GM12878 (cell line): ENCODE measurements at regions of chr4 and their contacts with region 1.

Region 1: DNA sequence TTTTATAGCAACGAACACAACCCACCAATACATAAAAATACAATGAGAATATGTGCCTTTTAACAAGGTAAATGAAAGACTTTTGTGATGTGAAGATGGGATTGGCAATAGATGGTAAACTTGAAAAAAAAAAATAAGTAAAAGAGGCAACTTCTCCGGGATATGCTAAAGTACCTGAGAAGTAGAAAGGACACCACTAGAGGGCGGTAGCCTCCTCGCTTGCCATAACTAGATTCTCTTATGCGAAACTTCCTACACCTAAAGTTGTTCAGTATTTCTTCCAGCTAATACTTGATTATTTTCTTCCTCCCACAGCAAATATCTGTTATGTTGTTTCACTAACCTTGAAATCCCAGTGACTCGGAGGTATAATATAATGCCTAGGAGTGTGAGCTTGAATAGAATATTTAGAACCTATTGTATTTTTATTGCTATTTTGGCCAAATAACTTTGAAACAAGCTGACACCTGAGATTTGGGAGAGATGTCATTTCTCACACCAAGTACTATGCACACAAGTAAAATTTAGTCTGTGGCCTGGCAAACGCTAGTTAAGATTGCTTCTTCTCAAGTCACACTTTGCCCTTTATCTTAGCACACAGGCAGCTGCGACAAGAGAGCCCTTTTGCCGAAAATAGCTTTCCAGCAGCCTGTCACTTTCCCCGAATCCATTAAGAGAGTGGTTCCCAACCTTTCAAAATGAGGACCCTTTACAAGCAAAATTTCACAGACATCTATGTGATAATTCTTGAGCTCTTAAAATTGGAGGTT is 44.9 kb upstream of the PDLIM5 start:
- DNase-seq: peak; percentile 25
- ATAC-seq: peak; percentile 87
- H3K4me3 ChIP-seq: no peak overlapping the region
- H3K27ac ChIP-seq: no peak overlapping the region
- H3K4me1 ChIP-seq: no peaks in the 10 kb centered on the region
- H3K27me3 ChIP-seq: no peaks in the 10 kb centered on the region
- CTCF ChIP-seq: peak; percentile 83 to 87 (median 86)
- EP300 ChIP-seq: no peak
- POLR2A ChIP-seq: no peak
- RAD21 ChIP-seq: peak; percentile 92

Region 2: DNA sequence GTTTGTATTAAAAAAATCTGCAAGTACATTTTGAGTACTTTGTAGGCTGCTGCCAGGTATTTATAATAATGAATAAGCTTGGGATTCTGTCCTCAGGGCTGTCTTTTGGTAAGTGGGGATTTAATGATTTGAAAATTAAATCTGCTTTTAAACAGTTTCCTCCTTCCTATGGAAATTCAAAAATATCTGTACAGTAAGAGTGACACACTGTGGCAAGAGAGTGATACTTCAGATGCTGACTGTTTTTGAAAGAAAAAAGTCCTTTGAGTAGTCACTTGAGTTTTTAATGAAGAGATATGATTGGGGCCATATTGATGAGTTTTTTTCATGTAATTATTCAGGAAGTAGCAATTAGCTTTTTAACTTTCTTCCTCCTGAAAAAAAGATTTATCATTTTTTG is 150.0 kb before region 1 on chr4:
- CTCF ChIA-PET with region 1: no interaction called
- POLR2A ChIA-PET with region 1: no interaction called
- RAD21 ChIA-PET with region 1: no interaction called
- SMC1A ChIA-PET with region 1: no interaction called
- in situ Hi-C with region 1: no loop called
- intact Hi-C with region 1: no loop called
- DNase-seq: no peak
- ATAC-seq: peak; percentile 47; the same call in 2 of the 3 replicates
- H3K4me3 ChIP-seq: no peak overlapping the region
- H3K27ac ChIP-seq: no peak overlapping the region
- H3K4me1 ChIP-seq: no peaks in the 10 kb centered on the region
- H3K27me3 ChIP-seq: no peaks in the 10 kb centered on the region
- CTCF ChIP-seq: peak in 2 of 3 experiments; percentile 20 to 23; a peak in 1 of 6 replicates
- EP300 ChIP-seq: no peak
- POLR2A ChIP-seq: no peak
- RAD21 ChIP-seq: peak; percentile 28; the same call in 1 of the 2 replicates

Region 3: GRCh38 chr4:94390804-94391410 is 15.9 kb before region 1 on chr4:
- CTCF ChIA-PET with region 1: interaction called, 26 read pairs
- POLR2A ChIA-PET with region 1: no interaction called
- RAD21 ChIA-PET with region 1: no interaction called
- SMC1A ChIA-PET with region 1: interaction called, 7 read pairs
- in situ Hi-C with region 1: no loop called
- intact Hi-C with region 1: no loop called
- DNase-seq: no peak
- ATAC-seq: peak; percentile 67
- H3K4me3 ChIP-seq: no peak overlapping the region
- H3K27ac ChIP-seq: no peak overlapping the region
- H3K4me1 ChIP-seq: no peaks in the 10 kb centered on the region
- H3K27me3 ChIP-seq: peaks cover 0 to 2% of the 10 kb centered on the region in 2 experiments; a peak in 1 of 4 replicates
- CTCF ChIP-seq: peak; percentile 46 to 53 (median 47); a peak in 4 of 6 replicates
- EP300 ChIP-seq: no peak
- POLR2A ChIP-seq: no peak
- RAD21 ChIP-seq: peak; percentile 49

Region 4: DNA sequence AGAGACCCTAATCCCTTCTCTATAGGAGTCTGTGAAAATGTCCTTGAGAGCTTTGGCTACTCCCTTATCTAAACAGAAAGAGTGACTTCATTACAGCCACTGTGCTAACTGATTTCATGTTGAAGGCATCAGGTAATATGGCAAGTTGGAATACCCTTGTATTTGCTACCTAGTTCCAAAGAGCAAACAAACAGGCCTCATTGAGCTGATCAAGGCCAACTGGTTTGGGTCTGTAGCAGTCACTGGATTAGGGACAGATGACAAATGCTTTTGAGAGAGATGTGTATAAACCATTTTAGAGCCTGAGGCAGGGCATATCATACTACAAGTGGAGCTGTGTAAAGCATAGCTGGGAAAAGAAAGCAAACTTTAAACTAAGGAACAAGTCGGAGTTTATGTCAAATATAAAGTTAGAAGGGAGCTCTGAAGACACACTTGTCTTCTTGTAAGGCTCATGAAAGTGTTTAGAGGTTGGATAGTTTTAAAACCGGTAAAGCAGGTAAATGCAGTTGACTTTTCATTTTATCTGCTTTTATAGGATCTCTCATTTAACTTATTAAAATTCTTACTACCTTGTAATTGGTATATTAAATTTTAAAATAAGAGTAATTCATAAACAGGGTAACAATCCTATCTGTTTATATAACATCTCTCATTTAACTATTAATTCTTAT is 22.2 kb after region 1 on chr4:
- CTCF ChIA-PET with region 1: interaction called, 32 read pairs
- POLR2A ChIA-PET with region 1: no interaction called
- RAD21 ChIA-PET with region 1: no interaction called
- SMC1A ChIA-PET with region 1: interaction called, 10 read pairs
- in situ Hi-C with region 1: no loop called
- intact Hi-C with region 1: no loop called
- DNase-seq: no peak
- ATAC-seq: no peak
- H3K4me3 ChIP-seq: no peak overlapping the region
- H3K27ac ChIP-seq: no peak overlapping the region
- H3K4me1 ChIP-seq: no peaks in the 10 kb centered on the region
- H3K27me3 ChIP-seq: no peaks in the 10 kb centered on the region; a peak in 1 of 4 replicates
- CTCF ChIP-seq: no peak
- EP300 ChIP-seq: no peak
- POLR2A ChIP-seq: no peak
- RAD21 ChIP-seq: no peak

Region 5: GRCh38 chr4:94578195-94578594 is 171.3 kb after region 1 on chr4:
- CTCF ChIA-PET with region 1: interaction called, 14 read pairs
- POLR2A ChIA-PET with region 1: no interaction called
- RAD21 ChIA-PET with region 1: interaction called, 7 read pairs
- SMC1A ChIA-PET with region 1: interaction called, 10 read pairs
- in situ Hi-C with region 1: no loop called
- intact Hi-C with region 1: no loop called
- DNase-seq: no peak
- ATAC-seq: no peak
- H3K4me3 ChIP-seq: no peak overlapping the region
- H3K27ac ChIP-seq: no peak overlapping the region
- H3K4me1 ChIP-seq: no peaks in the 10 kb centered on the region
- H3K27me3 ChIP-seq: no peaks in the 10 kb centered on the region
- CTCF ChIP-seq: no peak
- EP300 ChIP-seq: no peak
- POLR2A ChIP-seq: no peak
- RAD21 ChIP-seq: no peak

Region 6: GRCh38 chr4:94595879-94596483 is 189.1 kb after region 1 on chr4:
- CTCF ChIA-PET with region 1: interaction called, 32 read pairs
- POLR2A ChIA-PET with region 1: no interaction called
- RAD21 ChIA-PET with region 1: interaction called, 7 read pairs
- SMC1A ChIA-PET with region 1: interaction called, 17 read pairs
- in situ Hi-C with region 1: loop called (anchors 5 kb)
- intact Hi-C with region 1: loop called (anchors 1 kb)
- DNase-seq: peak; percentile 8
- ATAC-seq: peak; percentile 78
- H3K4me3 ChIP-seq: no peak overlapping the region
- H3K27ac ChIP-seq: no peak overlapping the region
- H3K4me1 ChIP-seq: no peaks in the 10 kb centered on the region
- H3K27me3 ChIP-seq: no peaks in the 10 kb centered on the region
- CTCF ChIP-seq: peak; percentile 45 to 76 (median 53); a peak in 4 of 6 replicates
- EP300 ChIP-seq: no peak
- POLR2A ChIP-seq: no peak
- RAD21 ChIP-seq: peak; percentile 89